ENCODE measurements at regions of chr2 and their contacts with region 1.

Region 1: GRCh38 chr2:204145263-204145751 is 208.7 kb downstream of the ICOS start:
- DNase-seq: peak; percentile 88
- H3K4me3 ChIP-seq: peak overlapping the region; percentile 18 to 41 (median 34)
- H3K27ac ChIP-seq: peak overlapping the region in 3 of 4 donors; percentile 20 to 35 (median 24)
- H3K4me1 ChIP-seq: no peaks in the 10 kb centered on the region
- H3K27me3 ChIP-seq: no peaks in the 10 kb centered on the region
- CTCF ChIP-seq: peak; percentile 77 to 95 (median 83)
- EP300 ChIP-seq: no peak
- POLR2A ChIP-seq: no peak

Region 2: GRCh38 chr2:204205538-204205937 is 60.2 kb after region 1 on chr2:
- intact Hi-C with region 1: no loop called
- DNase-seq: no peak
- H3K4me3 ChIP-seq: no peak overlapping the region
- H3K27ac ChIP-seq: no peak overlapping the region
- H3K4me1 ChIP-seq: no peaks in the 10 kb centered on the region
- H3K27me3 ChIP-seq: no peaks in the 10 kb centered on the region
- CTCF ChIP-seq: no peak
- EP300 ChIP-seq: no peak
- POLR2A ChIP-seq: no peak

Region 3: GRCh38 chr2:204313256-204313655 is 167.9 kb after region 1 on chr2:
- intact Hi-C with region 1: loop called (anchors 5 kb)
- DNase-seq: no peak
- H3K4me3 ChIP-seq: no peak overlapping the region
- H3K27ac ChIP-seq: no peak overlapping the region
- H3K4me1 ChIP-seq: peaks cover 0 to 23% (median 12%) of the 10 kb centered on the region in 4 donors
- H3K27me3 ChIP-seq: no peaks in the 10 kb centered on the region
- CTCF ChIP-seq: no peak
- EP300 ChIP-seq: no peak
- POLR2A ChIP-seq: no peak

Region 4: GRCh38 chr2:204386668-204387067 is 241.4 kb after region 1 on chr2:
- intact Hi-C with region 1: no loop called
- DNase-seq: no peak
- H3K4me3 ChIP-seq: no peak overlapping the region
- H3K27ac ChIP-seq: no peak overlapping the region
- H3K4me1 ChIP-seq: no peaks in the 10 kb centered on the region
- H3K27me3 ChIP-seq: no peaks in the 10 kb centered on the region
- CTCF ChIP-seq: no peak
- EP300 ChIP-seq: no peak
- POLR2A ChIP-seq: no peak

Region 5: GRCh38 chr2:204691911-204692510 is 546.7 kb after region 1 on chr2:
- intact Hi-C with region 1: loop called (anchors 10 kb)
- DNase-seq: peak; percentile 75
- H3K4me3 ChIP-seq: no peak overlapping the region
- H3K27ac ChIP-seq: peak overlapping the region in 2 of 4 donors; percentile 3 to 8
- H3K4me1 ChIP-seq: peaks cover 0 to 56% (median 35%) of the 10 kb centered on the region in 4 donors
- H3K27me3 ChIP-seq: no peaks in the 10 kb centered on the region
- CTCF ChIP-seq: peak; percentile 47 to 74 (median 64)
- EP300 ChIP-seq: peak in 1 of 4 donors; percentile 28
- POLR2A ChIP-seq: no peak

Region 6: DNA sequence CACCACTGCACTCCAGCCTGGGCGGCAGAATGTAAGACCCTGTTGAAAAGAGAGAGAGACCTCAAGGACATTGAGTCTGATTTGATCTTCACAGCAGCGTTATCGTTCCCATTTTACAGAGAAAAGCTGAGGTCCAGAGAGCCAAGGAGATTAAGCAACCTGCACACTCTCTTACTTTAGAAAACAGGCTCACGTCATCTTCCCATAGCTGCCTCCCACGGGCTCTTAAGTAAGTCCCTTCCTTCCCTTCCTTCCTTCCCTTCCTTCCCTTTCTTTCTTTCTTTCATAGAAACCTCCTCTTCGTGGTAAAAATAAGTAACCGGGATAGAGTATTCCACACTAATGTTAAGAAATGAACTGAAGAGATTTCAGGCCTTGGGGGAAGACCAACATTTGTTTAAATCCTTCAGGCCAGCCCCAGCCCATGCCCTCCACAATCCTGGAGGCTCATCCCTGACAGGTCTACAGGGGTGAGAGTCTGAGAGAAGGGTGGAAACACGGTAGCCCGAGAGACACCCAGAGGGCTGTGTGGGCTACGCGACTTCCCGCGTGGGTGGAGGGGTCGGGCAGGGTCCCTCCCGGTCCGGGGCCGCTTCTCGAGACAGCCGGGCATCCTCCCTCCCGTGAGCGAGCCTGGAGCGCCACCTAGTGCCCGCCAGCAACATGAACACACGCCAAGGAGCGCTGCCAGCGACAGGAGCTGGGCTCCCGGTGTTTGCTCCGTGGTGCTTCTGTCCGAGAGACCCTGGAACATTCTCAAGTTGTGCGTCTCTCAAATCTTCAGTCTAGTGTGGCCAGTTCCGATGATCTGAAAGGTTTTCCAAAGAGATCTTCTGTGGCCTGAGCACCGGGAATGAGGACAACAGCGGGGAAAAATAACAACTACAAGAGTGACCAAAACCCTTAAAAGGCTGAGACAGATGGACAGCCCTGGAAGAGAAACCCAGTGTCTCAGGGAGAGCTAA is 1780.3 kb after region 1 on chr2:
- intact Hi-C with region 1: loop called (anchors 5 kb)
- DNase-seq: peak; percentile 92
- H3K4me3 ChIP-seq: peak overlapping the region in 3 of 4 donors; percentile 26 to 41 (median 35)
- H3K27ac ChIP-seq: peak overlapping the region in 3 of 4 donors; percentile 53 to 69 (median 58)
- H3K4me1 ChIP-seq: peaks cover 0 to 18% (median 11%) of the 10 kb centered on the region in 4 donors
- H3K27me3 ChIP-seq: no peaks in the 10 kb centered on the region
- CTCF ChIP-seq: peak; percentile 89 to 96 (median 94)
- EP300 ChIP-seq: no peak
- POLR2A ChIP-seq: no peak

Measured in sigmoid colon (tissue), 7 donors.